ENCODE measurements at regions of chr10 and their contacts with region 1.

Region 1: GRCh38 chr10:124647421-124648130 is 96.6 kb downstream of the FAM53B start:
- DNase-seq: peak; percentile 88
- H3K4me3 Mint-ChIP-seq: peak overlapping the region; percentile 69
- H3K27ac Mint-ChIP-seq: peak overlapping the region; percentile 95
- H3K4me1 Mint-ChIP-seq: peaks cover 90% of the 10 kb centered on the region
- H3K27me3 Mint-ChIP-seq: no peaks in the 10 kb centered on the region

Region 2: DNA sequence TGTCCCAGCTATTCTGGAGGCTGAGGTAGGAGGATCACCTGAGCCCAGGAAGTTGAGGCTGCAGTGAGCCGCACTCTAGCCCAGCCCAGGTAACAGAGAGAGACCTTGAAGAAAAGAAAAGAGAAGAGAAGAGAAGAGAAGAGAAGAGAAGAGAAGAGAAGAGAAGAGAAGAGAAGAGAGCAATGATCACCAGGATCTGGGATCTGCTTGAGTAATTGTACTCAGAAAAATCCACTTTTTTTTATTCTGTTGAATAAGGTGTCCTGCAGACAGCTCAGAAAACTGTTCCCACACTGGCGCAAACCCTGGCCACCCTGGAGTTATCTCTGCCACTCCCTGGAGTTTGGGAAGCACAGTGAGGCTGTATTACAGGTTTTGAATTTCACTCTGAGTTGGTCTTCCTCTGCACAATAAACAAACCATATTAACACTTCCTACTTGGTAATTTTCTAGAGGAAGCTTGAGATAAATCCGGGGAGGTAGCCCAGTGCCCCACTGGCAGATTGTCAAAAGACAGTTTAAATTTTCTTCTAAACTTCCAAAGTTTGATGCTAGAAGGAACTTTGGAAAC is 219.3 kb before region 1 on chr10:
- CTCF ChIA-PET with region 1: no interaction called
- POLR2A ChIA-PET with region 1: no interaction called
- DNase-seq: no peak
- H3K4me3 Mint-ChIP-seq: no peak overlapping the region
- H3K27ac Mint-ChIP-seq: no peak overlapping the region
- H3K4me1 Mint-ChIP-seq: no peaks in the 10 kb centered on the region
- H3K27me3 Mint-ChIP-seq: peaks cover 12% of the 10 kb centered on the region

Region 3: GRCh38 chr10:124579011-124579399 is 68.6 kb before region 1 on chr10:
- CTCF ChIA-PET with region 1: no interaction called
- POLR2A ChIA-PET with region 1: no interaction called
- DNase-seq: no peak
- H3K4me3 Mint-ChIP-seq: no peak overlapping the region
- H3K27ac Mint-ChIP-seq: no peak overlapping the region
- H3K4me1 Mint-ChIP-seq: no peaks in the 10 kb centered on the region
- H3K27me3 Mint-ChIP-seq: no peaks in the 10 kb centered on the region

Region 4: DNA sequence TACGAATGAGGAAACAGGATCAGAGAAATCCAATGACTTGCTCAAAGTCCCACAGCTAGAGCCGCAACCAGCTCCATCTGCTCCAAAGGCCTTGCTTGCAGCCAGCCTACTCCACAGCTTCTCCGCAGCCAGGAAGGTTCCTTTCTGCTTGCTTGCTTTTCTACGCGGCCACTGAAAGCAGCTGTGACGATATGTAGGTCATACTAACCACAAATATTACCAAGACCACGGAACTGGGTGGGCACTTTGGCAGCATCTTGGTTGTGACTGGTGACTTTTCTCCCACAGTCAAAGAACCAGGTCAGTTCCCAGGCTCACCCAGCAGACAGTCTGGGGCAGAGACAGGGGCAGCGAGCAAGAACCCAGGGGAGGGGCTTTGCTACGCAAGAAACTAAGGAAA is 10.2 kb after region 1 on chr10:
- CTCF ChIA-PET with region 1: interaction called, 44 read pairs
- POLR2A ChIA-PET with region 1: interaction called, 53 read pairs
- DNase-seq: peak; percentile 62
- H3K4me3 Mint-ChIP-seq: peak overlapping the region; percentile 39
- H3K27ac Mint-ChIP-seq: peak overlapping the region; percentile 79
- H3K4me1 Mint-ChIP-seq: peaks cover 75% of the 10 kb centered on the region
- H3K27me3 Mint-ChIP-seq: no peaks in the 10 kb centered on the region

Region 5: GRCh38 chr10:124671486-124672075 is 24.0 kb after region 1 on chr10:
- CTCF ChIA-PET with region 1: interaction called, 12 read pairs
- POLR2A ChIA-PET with region 1: interaction called, 8 read pairs
- DNase-seq: no peak
- H3K4me3 Mint-ChIP-seq: no peak overlapping the region
- H3K27ac Mint-ChIP-seq: peak overlapping the region; percentile 76
- H3K4me1 Mint-ChIP-seq: peaks cover 71% of the 10 kb centered on the region
- H3K27me3 Mint-ChIP-seq: no peaks in the 10 kb centered on the region

Region 6: GRCh38 chr10:124688889-124689670 is 41.5 kb after region 1 on chr10:
- CTCF ChIA-PET with region 1: interaction called, 41 read pairs
- POLR2A ChIA-PET with region 1: interaction called, 89 read pairs
- DNase-seq: peak; percentile 83
- H3K4me3 Mint-ChIP-seq: peak overlapping the region; percentile 26
- H3K27ac Mint-ChIP-seq: peak overlapping the region; percentile 94
- H3K4me1 Mint-ChIP-seq: peaks cover 84% of the 10 kb centered on the region
- H3K27me3 Mint-ChIP-seq: no peaks in the 10 kb centered on the region

Region 7: DNA sequence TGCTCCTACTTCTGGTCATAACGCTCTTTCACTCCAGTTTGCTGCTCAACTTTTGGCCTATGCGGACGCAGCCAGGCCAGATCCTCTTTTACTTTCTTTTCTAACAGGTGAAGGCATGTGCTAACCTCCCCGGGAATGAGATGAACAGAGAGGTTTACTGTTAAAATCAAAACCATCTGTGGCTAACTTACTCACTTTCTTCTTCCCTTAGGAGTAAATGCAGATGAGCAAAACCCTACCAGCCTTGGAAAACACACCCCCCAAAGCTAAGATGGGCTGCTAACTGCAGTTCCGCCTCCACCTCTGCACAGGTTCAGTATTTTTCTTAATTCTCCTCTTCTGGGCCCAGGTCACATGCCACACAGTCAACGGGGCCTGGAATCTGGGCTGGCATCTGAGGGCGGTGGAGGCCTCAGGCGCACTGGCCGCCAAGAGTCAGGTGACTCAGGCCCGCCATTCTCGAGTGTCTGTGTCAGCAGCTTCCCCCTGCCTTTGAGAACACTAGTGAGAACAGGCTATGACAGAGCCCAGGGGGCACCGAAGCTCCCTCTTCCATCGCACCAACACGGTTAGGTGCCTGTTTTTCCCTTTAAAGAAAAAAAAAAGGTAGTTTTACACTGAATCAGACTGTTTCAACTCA is 85.5 kb after region 1 on chr10:
- CTCF ChIA-PET with region 1: interaction called, 10 read pairs
- POLR2A ChIA-PET with region 1: interaction called, 11 read pairs
- DNase-seq: peak; percentile 72
- H3K4me3 Mint-ChIP-seq: peak overlapping the region; percentile 66
- H3K27ac Mint-ChIP-seq: peak overlapping the region; percentile 88
- H3K4me1 Mint-ChIP-seq: peaks cover 97% of the 10 kb centered on the region
- H3K27me3 Mint-ChIP-seq: no peaks in the 10 kb centered on the region

Region 8: DNA sequence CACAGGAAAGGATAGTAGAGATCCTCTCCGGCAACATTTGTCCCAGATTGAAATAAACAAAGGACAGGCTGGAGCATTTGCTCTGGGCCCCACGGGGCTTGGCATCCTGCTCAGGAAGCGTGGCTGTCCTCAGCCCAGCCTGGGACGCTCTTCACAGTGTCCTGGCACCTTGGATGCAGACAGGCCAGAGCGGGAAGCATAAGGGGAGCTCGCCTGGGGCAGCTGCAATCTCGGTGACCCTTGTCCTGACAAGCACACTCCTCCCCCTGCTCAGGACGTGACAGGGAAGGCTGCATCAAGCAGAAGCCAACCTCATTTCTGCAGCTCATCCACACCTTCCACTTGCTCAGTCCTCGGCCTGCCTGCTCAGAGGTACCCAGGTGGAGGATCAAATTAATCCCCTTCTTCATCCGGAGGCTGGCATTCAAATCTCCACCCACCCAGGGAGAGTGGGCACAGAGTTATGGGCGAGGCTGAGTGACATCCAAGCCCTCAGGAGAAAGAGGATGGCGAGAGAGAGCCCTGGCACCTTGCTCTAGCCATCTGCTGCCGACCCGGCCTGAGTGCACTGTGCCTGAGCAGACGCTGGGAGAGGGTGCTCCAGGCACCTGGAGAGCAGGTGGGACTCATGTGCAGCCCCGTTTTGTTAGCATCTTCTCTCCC is 201.7 kb after region 1 on chr10:
- CTCF ChIA-PET with region 1: no interaction called
- POLR2A ChIA-PET with region 1: no interaction called
- DNase-seq: no peak
- H3K4me3 Mint-ChIP-seq: no peak overlapping the region
- H3K27ac Mint-ChIP-seq: no peak overlapping the region
- H3K4me1 Mint-ChIP-seq: no peaks in the 10 kb centered on the region
- H3K27me3 Mint-ChIP-seq: peaks cover 1% of the 10 kb centered on the region